ENCODE measurements at regions of chr4 and their contacts with region 1.

Region 1: DNA sequence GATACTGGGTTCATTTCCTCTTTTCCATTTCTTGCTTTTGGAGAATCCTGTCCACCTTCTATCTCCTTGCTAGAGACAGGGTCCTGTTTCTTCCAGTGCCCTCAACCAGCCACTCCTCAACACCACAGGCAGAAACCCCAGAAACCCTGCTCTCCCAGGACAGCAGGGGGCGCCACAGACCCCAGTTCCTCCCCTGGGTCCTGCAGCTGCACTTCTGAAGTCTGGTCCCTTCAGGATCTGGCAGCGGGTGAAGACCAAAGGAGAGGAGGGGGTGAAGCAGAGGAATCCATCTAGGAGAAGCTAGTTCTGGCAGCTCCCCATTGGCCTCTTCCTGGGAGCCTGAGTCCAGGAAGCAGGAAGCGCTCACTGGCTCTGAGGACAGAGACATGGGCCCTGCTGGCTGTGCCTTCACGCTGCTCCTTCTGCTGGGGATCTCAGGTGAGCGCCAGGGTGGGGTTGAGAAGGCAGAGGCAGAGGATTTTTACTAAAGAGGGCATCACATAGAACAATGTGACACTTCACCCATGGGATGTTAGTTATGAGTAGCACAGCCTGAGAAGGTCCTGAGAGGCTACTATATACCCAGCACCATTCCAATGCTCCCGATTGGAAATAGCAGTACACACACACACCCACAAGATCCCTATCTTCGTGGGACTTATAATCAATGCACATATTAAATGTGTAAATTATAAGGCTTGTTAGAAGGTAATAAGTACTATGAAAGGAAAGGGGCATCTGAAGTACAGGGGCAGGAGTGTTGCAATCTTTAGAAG is at the start of gene PRSS48:
- DNase-seq: peak; percentile 71
- ATAC-seq: peak; percentile 85
- total RNA-seq, gene PRSS48: not detected

Region 2: GRCh38 chr4:151325111-151325948 is 48.4 kb after region 1 on chr4 and contains the start of gene SH3D19:
- intact Hi-C with region 1: loop called (anchors 10 kb)
- DNase-seq: peak; percentile 84
- ATAC-seq: peak; percentile 91
- total RNA-seq, gene SH3D19: 96.7 TPM

Region 3: DNA sequence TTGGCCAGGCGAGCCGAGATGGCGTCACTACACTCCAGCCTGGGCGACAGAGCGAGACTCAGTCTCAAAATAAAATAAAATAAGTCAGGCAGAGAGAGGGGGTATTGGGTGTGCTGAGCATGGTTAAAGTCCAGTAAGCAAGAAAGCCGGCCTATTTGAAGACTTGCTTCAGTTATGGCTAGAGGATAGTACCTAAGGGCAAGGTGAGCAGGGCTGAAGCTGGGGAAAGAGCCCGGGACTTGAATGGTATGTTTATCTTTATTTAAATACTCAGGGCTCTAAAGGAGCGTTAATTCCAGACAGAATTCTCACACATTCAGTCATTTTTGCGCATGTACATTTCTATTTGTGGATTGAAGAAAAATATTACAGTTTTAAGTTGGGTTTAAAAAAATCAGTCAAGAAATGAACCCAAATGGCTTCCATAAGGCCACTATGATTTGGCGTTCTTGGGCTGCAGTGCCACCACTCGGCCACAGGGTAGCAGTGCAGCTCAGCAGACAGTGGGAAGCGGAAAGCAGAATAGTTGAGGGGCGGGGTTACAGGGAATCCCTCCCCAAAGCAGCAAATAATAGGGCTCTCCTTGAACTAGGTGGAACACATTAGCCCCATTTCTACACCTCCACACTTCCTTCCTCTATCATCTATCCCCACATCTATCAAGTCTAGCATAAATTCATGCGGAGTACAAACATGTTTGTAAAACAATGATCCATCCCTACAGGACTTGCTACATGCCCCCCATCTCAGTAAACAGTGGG is 85.6 kb after region 1 on chr4:
- intact Hi-C with region 1: loop called (anchors 5 kb)
- DNase-seq: peak; percentile 82
- ATAC-seq: peak; percentile 99